ENCODE measurements at regions of chr9 and their contacts with region 1.

Region 1: DNA sequence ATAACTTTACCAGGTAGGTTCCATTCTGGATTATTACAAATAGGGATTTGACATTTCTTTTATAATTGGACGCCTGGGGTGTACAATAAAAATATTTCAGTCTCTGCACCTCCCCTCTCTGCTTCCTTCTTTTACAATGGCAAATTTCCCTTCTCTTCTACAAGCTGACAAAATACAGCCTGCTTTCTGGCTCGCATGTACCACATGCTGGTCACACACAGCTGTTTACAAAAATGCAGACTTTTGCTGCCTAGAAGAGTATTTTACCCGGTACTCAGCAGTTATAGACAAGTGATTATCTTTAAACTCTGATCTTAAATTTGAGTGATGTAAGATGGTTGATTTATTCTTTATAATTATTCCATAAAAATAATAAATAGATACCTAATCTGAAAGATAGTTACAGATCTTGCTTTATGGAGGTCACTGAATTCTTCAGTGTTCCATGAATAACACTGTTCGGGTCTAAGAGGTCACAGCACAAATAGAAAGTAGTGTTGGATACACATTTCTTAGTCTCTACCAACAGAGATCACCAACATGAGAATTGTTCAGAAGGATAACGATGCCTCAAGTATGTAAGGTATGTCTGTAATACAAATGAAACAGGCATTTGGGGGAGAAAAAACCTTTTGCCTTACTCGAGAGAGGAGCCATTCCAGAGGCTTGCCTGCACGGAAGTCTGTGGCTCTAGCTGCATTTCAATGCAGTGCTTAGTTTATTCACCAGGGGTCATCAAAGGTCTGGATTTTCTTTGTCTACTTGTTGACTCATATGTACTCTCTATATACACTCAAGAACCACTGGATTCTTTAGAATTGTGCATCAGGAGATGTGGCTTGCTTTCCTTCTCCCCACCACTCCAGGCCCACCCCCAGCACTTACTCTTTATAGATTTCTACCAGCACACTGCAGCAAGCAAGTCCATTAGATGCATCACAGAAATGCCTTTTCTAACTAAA is 206.6 kb upstream of the RFX3 start:
- DNase-seq: no peak
- ATAC-seq: peak; percentile 73 to 98 (median 87)
- H3K4me3 ChIP-seq: peak overlapping the region; percentile 15
- H3K27ac ChIP-seq: no peak overlapping the region
- H3K4me1 ChIP-seq: no peaks in the 10 kb centered on the region
- H3K27me3 ChIP-seq: no peaks in the 10 kb centered on the region
- CTCF ChIP-seq: peak; percentile 58

Region 2: GRCh38 chr9:3848445-3849114 is 116.2 kb after region 1 on chr9:
- intact Hi-C with region 1: no loop called
- DNase-seq: no peak
- ATAC-seq: no peak
- H3K4me3 ChIP-seq: no peak overlapping the region
- H3K27ac ChIP-seq: no peak overlapping the region
- H3K4me1 ChIP-seq: no peaks in the 10 kb centered on the region
- H3K27me3 ChIP-seq: no peaks in the 10 kb centered on the region
- CTCF ChIP-seq: no peak

Region 3: DNA sequence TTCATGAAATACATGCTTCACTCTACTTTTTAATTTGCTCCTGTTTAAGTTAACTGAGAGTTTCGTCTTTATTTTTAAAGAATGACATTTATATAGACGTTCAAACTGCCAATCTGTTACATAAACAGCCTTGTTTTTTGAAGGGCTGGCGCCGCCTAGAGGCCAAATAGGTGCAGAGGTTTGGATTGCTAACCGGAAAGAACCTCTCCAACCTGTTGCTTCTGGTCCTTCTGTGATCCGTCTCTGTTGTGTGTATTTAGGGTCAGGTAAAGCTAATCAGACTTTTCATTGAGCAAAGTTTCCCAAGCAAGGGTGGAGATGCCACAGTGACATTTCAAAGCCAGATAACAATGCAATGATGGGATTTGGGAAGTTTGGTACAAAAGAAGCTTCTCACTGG is 607.0 kb after region 1 on chr9:
- intact Hi-C with region 1: loop called (anchors 5 to 10 kb)
- DNase-seq: peak; percentile 80 to 82
- ATAC-seq: peak; percentile 62 to 86 (median 74)
- H3K4me3 ChIP-seq: no peak overlapping the region
- H3K27ac ChIP-seq: no peak overlapping the region
- H3K4me1 ChIP-seq: no peaks in the 10 kb centered on the region
- H3K27me3 ChIP-seq: peaks cover 0 to 3% (median 0%) of the 10 kb centered on the region in 3 donors
- CTCF ChIP-seq: peak; percentile 85